ENCODE measurements at regions of chr16 and their contacts with region 1.

Region 1: GRCh38 chr16:64317601-64318000 is 804.3 kb downstream of the CDH11 start:
- DNase-seq: no peak
- H3K4me3 ChIP-seq: peak overlapping the region; percentile 1
- H3K27ac ChIP-seq: peak overlapping the region; percentile 100
- H3K4me1 ChIP-seq: peaks cover 96% of the 10 kb centered on the region
- CTCF ChIP-seq: no peak

Region 2: DNA sequence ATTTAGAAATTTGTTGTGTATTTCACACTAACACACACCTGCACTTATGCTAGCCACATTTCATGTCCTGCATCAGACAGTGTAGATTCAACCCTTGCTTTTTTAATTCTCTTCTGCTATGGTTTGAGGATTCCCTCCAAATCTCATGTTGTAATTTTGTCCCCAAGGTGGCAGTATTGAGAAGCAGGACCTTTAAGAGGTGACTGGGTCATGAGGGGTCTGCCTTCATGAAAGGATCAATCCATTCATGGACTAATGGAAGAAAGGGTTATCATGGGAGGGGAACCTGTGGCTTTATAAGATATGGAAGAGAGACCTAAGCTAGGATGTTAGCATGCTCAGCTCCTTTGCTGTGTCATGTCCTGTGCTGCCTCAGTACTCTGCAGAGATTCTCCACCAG is 227.9 kb before region 1 on chr16:
- CTCF ChIA-PET with region 1: no interaction called
- POLR2A ChIA-PET with region 1: no interaction called
- intact Hi-C with region 1: loop called (anchors 1 kb)
- DNase-seq: peak; percentile 78
- H3K4me3 ChIP-seq: no peak overlapping the region
- H3K27ac ChIP-seq: no peak overlapping the region
- H3K4me1 ChIP-seq: peaks cover 17% of the 10 kb centered on the region
- CTCF ChIP-seq: peak; percentile 88

Region 3: DNA sequence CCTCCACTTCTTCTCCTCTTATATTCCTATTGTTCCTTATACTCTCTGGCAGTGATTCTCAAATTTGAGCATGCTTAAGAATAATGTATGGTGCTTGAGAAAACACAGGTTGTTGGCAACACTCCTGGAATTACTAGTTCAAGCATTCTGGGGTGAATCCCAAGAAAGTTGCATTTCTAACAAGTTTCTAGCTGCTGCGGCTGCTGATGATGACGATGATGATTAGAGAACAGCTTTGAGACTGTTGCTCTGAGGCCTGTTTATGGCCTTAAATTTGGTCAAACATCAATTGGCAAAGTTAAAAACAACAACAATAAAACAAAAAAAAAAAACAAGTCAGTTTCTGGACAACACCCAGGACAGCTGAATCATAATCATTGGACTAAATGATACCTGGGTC is 157.6 kb before region 1 on chr16:
- CTCF ChIA-PET with region 1: no interaction called
- POLR2A ChIA-PET with region 1: interaction called, 4 read pairs
- intact Hi-C with region 1: loop called (anchors 5 kb)
- DNase-seq: no peak
- H3K4me3 ChIP-seq: no peak overlapping the region
- H3K27ac ChIP-seq: no peak overlapping the region
- H3K4me1 ChIP-seq: peaks cover 33% of the 10 kb centered on the region
- CTCF ChIP-seq: no peak

Region 4: GRCh38 chr16:64455254-64455653 is 137.7 kb after region 1 on chr16:
- CTCF ChIA-PET with region 1: no interaction called
- POLR2A ChIA-PET with region 1: interaction called, 3 read pairs
- intact Hi-C with region 1: loop called (anchors 5 kb)
- DNase-seq: peak; percentile 39
- H3K4me3 ChIP-seq: no peak overlapping the region
- H3K27ac ChIP-seq: no peak overlapping the region
- H3K4me1 ChIP-seq: peaks cover 13% of the 10 kb centered on the region
- CTCF ChIP-seq: peak; percentile 78

Measured in OCI-LY7 (cell line).